Activated T-helper 2 cell treated with anti-CD3 and anti-CD28 coated beads, Interferon-gamma antibody, Interleukin-2, Interleukin-4, amounts not matched to agents 10 μg/mL and 5 μg/mL and 100 μg/mL, durations not matched to agents 14 hours and 24 hours and 36 hours (primary cell): ENCODE measurements at regions of chr17 and their contacts with region 1.

Region 1: GRCh38 chr17:16380640-16381495 is at the start of gene UBB:
- DNase-seq: peak; percentile 95
- H3K4me3 Mint-ChIP-seq: peak within 1 kb of the TSS; percentile 96
- H3K27ac Mint-ChIP-seq: peak within 1 kb of the TSS; percentile 92
- H3K4me1 Mint-ChIP-seq: peaks cover 30% of the 10 kb centered on the region
- H3K27me3 Mint-ChIP-seq: no peaks in the 10 kb centered on the region
- total RNA-seq, gene UBB: 1,784 and 1,798 TPM in 2 replicates

Region 2: GRCh38 chr17:15999439-16000350 is 381.2 kb before region 1 on chr17 and contains the starts of genes TTC19 and ZSWIM7:
- intact Hi-C with region 1: loop called (anchors 1 kb)
- DNase-seq: peak; percentile 92
- H3K4me3 Mint-ChIP-seq: peak within 1 kb of the TSS; percentile 94
- H3K27ac Mint-ChIP-seq: peak within 1 kb of the TSS; percentile 96
- H3K4me1 Mint-ChIP-seq: peaks cover 27% of the 10 kb centered on the region
- H3K27me3 Mint-ChIP-seq: no peaks in the 10 kb centered on the region
- total RNA-seq, gene TTC19: 32.7 and 35.3 TPM in 2 replicates
- total RNA-seq, gene ZSWIM7: 12.8 and 14.2 TPM in 2 replicates

Region 3: GRCh38 chr17:16415031-16415924 is 34.4 kb after region 1 on chr17 and contains the start of gene TRPV2:
- intact Hi-C with region 1: loop called (anchors 1 kb)
- DNase-seq: peak; percentile 30
- H3K4me3 Mint-ChIP-seq: peak within 1 kb of the TSS; percentile 96
- H3K27ac Mint-ChIP-seq: peak within 1 kb of the TSS; percentile 96
- H3K4me1 Mint-ChIP-seq: peaks cover 37% of the 10 kb centered on the region
- H3K27me3 Mint-ChIP-seq: no peaks in the 10 kb centered on the region
- total RNA-seq, gene TRPV2: 44.4 and 46.8 TPM in 2 replicates

Region 4: DNA sequence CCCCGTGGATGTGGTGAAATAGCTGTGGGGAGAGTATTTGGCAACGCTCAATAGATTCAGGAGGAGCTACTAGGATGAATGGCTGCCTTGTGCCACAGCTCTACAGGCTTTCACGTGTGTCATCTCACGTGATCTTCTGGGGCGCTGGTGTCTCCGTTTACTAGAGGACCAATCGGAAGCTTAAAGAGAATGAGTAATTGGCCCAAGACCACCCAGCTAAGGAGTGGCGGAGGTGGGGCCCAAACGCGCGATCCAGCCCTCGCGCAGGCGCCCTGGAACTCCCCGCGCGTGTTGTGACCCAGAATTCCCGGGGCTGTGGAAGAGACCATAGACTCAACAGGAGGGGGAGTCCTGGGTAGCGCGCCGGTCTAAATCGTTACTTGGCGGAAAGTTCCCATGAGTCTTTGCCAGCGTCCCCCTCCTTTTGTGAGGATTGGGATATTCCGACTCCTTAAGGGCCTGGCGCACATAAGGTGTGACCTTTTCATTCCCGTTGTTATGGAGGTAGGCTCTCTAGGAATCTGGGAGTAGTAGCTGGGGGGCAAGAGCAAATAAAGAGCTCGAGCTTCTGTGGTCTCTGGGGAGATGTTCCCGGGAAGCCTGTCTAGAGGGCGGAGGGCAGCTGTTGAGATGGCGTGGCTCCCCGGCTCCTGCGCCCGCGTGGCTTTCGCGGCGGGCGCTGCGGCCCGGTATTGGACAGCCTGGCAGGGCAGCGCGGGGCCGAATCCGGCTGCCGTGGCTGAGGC is 57.9 kb after region 1 on chr17:
- intact Hi-C with region 1: loop called (anchors 1 kb)
- DNase-seq: peak; percentile 95
- H3K4me3 Mint-ChIP-seq: peak overlapping the region; percentile 98
- H3K27ac Mint-ChIP-seq: peak overlapping the region; percentile 94
- H3K4me1 Mint-ChIP-seq: peaks cover 27% of the 10 kb centered on the region
- H3K27me3 Mint-ChIP-seq: no peaks in the 10 kb centered on the region

Region 5: GRCh38 chr17:16521070-16521727 is 140.3 kb after region 1 on chr17:
- intact Hi-C with region 1: loop called (anchors 1 kb)
- DNase-seq: peak; percentile 47
- H3K4me3 Mint-ChIP-seq: no peak overlapping the region
- H3K27ac Mint-ChIP-seq: no peak overlapping the region
- H3K4me1 Mint-ChIP-seq: peaks cover 8% of the 10 kb centered on the region
- H3K27me3 Mint-ChIP-seq: peaks cover 24% of the 10 kb centered on the region

Region 6: GRCh38 chr17:16537130-16537458 is 156.2 kb after region 1 on chr17:
- intact Hi-C with region 1: loop called (anchors 5 kb)
- DNase-seq: no peak
- H3K4me3 Mint-ChIP-seq: peak overlapping the region; percentile 90
- H3K27ac Mint-ChIP-seq: no peak overlapping the region
- H3K4me1 Mint-ChIP-seq: peaks cover 15% of the 10 kb centered on the region
- H3K27me3 Mint-ChIP-seq: peaks cover 2% of the 10 kb centered on the region

Region 7: GRCh38 chr17:16589097-16589969 is 208.5 kb after region 1 on chr17:
- intact Hi-C with region 1: loop called (anchors 5 kb)
- DNase-seq: peak; percentile 87
- H3K4me3 Mint-ChIP-seq: peak overlapping the region; percentile 66
- H3K27ac Mint-ChIP-seq: no peak overlapping the region
- H3K4me1 Mint-ChIP-seq: peaks cover 5% of the 10 kb centered on the region
- H3K27me3 Mint-ChIP-seq: peaks cover 49% of the 10 kb centered on the region